HepG2 (cell line): ENCODE measurements at regions of chr17 and their contacts with region 1.

Region 1: GRCh38 chr17:6421700-6422604 is 13.0 kb downstream of the AIPL1 start:
- DNase-seq: peak; percentile 66
- ATAC-seq: peak; percentile 85
- H3K4me3 ChIP-seq: no peak overlapping the region
- H3K27ac ChIP-seq: no peak overlapping the region
- H3K4me1 ChIP-seq: no peaks in the 10 kb centered on the region
- H3K27me3 ChIP-seq: peaks cover 0 to 19% of the 10 kb centered on the region in 2 experiments; a peak in 3 of 5 replicates
- CTCF ChIP-seq: peak; percentile 95
- EP300 ChIP-seq: no peak
- POLR2A ChIP-seq: no peak
- RAD21 ChIP-seq: peak; percentile 92

Region 2: DNA sequence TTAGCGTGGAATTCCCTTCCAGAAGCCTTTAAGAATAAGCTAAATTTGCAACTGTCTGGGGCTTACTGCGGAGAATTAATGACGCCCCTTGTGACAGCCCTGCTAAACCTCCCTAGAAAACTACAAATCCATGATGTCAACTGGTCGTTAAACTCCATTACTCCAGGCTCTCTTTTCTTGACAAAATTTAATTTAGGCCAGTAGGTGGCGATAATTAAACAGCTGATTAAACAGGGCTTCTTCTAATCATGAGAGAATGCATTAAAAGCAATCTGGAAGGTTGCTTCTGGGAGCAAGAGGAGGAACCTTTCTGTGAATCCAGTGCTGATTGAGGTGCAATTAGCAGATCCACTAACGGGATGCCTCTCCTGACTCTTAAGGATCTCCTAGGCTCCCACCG is 829.6 kb before region 1 on chr17:
- CTCF ChIA-PET with region 1: interaction called, 56 read pairs
- POLR2A ChIA-PET with region 1: no interaction called
- in situ Hi-C with region 1: loop called (anchors 5 kb)
- intact Hi-C with region 1: loop called (anchors 1 kb)
- DNase-seq: peak; percentile 33
- ATAC-seq: no peak
- H3K4me3 ChIP-seq: no peak overlapping the region
- H3K27ac ChIP-seq: no peak overlapping the region
- H3K4me1 ChIP-seq: no peaks in the 10 kb centered on the region
- H3K27me3 ChIP-seq: peaks cover 1 to 7% of the 10 kb centered on the region in 2 experiments; a peak in 2 of 5 replicates
- CTCF ChIP-seq: peak; percentile 61
- EP300 ChIP-seq: no peak
- POLR2A ChIP-seq: no peak
- RAD21 ChIP-seq: peak; percentile 15; the same call in 1 of the 2 replicates

Region 3: GRCh38 chr17:5706577-5707216 is 715.3 kb before region 1 on chr17:
- CTCF ChIA-PET with region 1: no interaction called
- POLR2A ChIA-PET with region 1: no interaction called
- in situ Hi-C with region 1: loop called (anchors 25 kb)
- intact Hi-C with region 1: loop called (anchors 5 kb)
- DNase-seq: peak; percentile 35
- ATAC-seq: peak; percentile 79
- H3K4me3 ChIP-seq: no peak overlapping the region
- H3K27ac ChIP-seq: no peak overlapping the region
- H3K4me1 ChIP-seq: no peaks in the 10 kb centered on the region
- H3K27me3 ChIP-seq: no peaks in the 10 kb centered on the region
- CTCF ChIP-seq: peak; percentile 79
- EP300 ChIP-seq: no peak
- POLR2A ChIP-seq: no peak
- RAD21 ChIP-seq: no peak